ENCODE measurements at regions of chr4 and their contacts with region 1.

Region 1: DNA sequence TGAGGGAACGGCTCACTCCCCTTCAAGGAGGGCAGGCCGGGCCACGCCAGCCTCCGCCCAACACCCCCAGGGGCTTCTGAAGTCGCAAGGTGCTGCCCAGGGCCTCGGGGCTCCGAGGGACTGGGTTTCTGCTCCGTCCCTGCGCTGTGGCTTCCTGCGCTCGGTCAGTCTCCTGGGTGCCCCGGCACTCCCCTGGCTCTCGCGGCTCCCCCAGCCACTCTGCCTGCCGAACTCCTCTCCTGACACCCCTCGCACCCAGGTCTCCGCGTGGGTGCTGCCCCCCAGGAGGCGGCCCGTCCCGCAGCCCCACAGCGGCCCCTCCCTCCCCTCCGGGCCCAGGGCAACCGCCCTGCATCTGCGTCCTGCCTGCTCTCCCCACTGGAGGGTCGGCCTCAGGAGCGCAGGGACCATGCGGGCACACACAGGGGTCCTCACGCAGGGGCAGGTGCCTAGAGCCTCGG is 151.9 kb downstream of the AFAP1 start:
- DNase-seq: peak; percentile 68

Region 2: DNA sequence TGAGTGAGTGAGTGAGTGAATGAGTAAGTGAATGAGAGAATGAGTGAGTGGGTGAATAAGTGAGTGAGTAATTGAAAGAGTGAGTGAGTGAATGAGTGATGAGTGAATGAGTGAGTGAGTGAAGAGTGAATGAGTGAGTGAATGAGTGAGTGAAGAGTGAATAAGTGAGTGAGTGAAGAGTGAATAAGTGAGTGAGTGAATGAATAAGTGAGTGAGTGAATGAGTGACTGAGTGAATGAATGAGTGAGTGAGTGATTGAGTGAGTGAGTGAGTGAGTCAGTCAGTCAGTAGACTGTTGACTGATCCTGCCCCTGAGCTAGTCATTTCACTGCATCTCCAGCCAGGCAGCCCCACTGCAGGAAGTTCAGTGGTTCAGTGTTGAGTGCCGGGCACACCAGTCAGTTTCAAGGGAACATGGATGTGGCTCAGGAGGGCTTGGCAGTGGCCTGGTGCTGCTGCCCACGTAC is 124.6 kb before region 1 on chr4:
- intact Hi-C with region 1: no loop called
- DNase-seq: no peak

Region 3: DNA sequence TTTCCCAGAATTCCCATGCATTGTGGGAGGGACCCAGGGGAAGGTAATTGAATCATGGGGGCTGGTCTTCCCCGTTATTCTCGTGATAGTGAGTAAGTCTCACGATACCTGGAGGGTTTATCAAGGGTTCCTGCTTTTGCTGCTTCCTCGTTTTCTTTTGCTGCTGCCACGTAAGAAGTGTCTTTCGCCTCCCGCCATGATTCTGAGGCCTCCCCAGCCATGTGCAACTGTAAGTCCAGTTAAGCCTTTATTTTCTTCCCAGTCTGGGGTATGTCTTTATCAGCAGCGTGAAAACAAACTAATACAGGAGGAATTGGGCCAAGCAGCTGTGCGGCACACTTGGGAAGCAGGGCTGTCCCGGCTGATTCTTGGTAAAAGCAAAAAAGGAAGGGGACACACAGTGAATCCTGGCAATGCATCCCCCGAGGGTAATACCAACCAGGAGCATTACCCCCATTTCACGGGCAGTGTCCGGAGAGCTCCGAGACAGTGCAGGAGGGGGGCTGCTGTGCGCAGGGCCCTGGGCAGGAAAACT is 33.7 kb before region 1 on chr4:
- intact Hi-C with region 1: loop called in 1 of 2 experiments (anchors 1 kb)
- DNase-seq: no peak

Region 4: DNA sequence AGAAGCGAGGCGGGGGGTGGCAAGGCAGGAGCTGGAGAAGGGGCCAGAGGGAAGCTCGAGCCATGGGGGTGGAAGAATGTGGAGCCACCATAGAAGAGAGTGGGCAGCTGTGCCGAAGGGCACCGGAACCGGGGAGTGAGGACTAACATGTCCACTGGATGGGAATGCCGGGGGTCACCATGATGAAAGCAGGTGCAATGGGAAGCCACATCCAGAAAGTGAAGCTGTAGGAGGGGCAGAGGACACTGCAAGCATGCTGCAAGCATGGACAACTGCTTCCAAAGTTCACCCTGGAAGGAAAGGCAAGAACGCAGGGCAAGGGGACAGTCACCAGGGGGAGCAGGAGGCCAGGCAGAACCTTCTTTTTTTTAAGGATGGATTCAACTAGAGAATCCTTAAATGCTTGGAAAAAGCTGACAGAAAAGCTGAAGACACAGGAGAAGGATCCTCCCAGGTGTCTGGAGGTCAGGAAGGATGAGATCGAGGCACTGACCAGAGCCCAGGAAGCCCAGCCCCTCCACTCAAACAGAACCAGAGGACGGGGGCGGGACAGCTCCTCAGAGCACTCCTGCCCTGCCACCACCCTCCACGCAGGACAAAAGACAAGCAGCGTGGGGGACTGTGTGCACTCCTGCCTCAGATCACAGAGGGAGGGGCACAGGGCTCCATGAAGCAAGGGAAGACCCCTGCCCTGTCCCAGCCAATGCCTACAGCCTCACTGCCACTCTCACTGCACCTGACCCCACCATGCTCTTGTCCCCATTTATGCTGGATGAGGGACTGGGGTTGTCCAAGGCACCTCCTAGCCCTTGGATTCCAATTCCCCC is 17.3 kb before region 1 on chr4:
- intact Hi-C with region 1: no loop called
- DNase-seq: peak; percentile 71